Posterior cingulate gyrus (tissue), 11 donors: ENCODE measurements at regions of chr2 and their contacts with region 1.

Region 1: GRCh38 chr2:163182764-163183354 is 344.3 kb upstream of the KCNH7 start:
- DNase-seq: no peak

Region 2: DNA sequence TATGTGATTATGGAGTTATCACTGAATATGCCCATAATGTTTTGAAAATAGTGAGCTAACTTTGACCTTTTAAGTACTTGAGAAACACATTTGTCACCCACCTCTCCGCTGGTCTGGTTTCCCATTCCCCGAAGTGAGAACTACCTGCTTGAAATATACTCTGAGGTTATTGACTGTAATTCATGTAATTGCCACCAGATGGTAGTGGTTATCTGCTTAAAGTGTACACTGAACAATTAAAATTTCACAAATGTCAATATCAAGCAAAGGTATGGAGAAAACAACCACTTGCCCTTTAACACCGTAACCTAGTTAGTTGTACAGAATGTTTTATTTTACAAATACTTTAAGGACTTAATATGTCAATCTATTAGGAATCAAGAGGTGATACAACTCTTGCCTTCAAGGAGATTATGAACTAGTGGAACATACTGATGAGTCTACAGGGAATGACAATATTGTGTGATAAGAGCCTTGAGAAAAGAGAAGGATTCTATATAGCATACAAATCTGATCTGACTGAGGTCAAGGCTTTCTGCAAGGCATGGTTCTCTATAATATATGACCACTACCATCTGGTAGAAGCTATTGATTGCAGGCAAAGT is 27.5 kb before region 1 on chr2:
- intact Hi-C with region 1: no loop called
- DNase-seq: no peak

Region 3: GRCh38 chr2:163281717-163282116 is 98.9 kb after region 1 on chr2:
- intact Hi-C with region 1: no loop called
- DNase-seq: no peak

Region 4: GRCh38 chr2:164479460-164479859 is 1296.6 kb after region 1 on chr2:
- intact Hi-C with region 1: loop called (anchors 5 kb)
- DNase-seq: peak in 8 of 10 donors; percentile 15 to 90 (median 45)

Region 5: DNA sequence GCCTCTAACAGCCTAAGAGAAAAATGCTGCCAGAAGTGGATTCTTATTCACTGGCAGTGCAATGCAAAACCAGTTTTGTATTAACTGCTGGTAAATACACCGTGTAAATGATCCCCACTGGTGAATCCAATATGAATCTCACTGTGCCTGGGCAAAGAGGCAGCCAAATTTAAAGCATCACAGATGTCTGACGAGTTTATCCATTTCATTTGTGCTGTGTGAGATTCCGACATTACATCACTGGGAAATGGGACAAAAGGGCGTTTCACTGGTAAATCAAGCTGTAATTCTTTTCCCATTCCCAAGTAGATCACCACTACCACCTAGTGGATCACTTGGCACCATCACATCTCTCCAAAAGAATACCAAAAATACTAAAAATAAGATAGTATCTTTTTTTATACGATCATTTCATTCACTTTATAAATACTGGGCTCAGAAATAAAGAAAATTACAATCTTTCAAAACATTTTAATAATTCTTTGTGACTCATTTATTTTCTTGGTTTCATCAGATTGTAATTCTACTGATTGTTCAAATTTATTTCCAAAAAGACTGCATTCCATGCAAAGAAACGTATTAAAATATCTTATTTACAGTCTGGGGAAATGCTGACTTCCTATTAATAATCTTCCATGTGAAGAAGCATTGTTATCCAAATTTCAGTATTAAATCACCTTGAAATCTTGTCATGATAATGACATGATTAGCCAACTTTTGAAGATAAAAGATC is 1312.8 kb after region 1 on chr2:
- intact Hi-C with region 1: loop called (anchors 5 kb)
- DNase-seq: peak in 3 of 10 donors; percentile 8 to 58 (median 21)